ENCODE measurements at regions of chr12 and their contacts with region 1.

Region 1: DNA sequence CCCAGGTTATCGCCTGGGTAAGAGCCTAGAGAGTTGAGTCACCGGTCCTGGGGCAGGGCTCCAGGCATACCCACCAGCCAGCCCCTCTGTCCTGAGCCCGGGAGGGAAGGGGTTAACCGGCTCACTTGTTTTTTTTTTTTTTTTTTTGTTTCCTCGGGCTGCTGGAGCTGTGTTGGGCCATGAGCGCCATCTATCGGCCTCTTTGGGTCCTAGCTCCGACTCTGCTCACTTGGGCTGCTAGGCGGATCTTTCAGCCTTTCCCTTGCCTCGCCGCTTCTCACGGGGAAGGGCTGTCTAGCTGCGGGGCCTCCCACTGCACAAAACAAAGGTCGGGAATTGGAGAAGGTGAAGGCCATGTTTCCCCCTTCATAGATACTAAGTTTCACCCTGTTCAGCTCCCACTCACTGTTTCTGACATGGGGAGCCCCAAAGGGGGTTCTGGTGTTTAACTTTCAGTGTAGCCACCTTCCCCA is 2.8 kb upstream of the SMUG1 start:
- DNase-seq: peak; percentile 76
- H3K4me3 ChIP-seq: no peak overlapping the region
- H3K27ac ChIP-seq: no peak overlapping the region
- H3K4me1 ChIP-seq: peaks cover 18% of the 10 kb centered on the region
- H3K27me3 ChIP-seq: peaks cover 68% of the 10 kb centered on the region
- CTCF ChIP-seq: peak; percentile 86

Region 2: DNA sequence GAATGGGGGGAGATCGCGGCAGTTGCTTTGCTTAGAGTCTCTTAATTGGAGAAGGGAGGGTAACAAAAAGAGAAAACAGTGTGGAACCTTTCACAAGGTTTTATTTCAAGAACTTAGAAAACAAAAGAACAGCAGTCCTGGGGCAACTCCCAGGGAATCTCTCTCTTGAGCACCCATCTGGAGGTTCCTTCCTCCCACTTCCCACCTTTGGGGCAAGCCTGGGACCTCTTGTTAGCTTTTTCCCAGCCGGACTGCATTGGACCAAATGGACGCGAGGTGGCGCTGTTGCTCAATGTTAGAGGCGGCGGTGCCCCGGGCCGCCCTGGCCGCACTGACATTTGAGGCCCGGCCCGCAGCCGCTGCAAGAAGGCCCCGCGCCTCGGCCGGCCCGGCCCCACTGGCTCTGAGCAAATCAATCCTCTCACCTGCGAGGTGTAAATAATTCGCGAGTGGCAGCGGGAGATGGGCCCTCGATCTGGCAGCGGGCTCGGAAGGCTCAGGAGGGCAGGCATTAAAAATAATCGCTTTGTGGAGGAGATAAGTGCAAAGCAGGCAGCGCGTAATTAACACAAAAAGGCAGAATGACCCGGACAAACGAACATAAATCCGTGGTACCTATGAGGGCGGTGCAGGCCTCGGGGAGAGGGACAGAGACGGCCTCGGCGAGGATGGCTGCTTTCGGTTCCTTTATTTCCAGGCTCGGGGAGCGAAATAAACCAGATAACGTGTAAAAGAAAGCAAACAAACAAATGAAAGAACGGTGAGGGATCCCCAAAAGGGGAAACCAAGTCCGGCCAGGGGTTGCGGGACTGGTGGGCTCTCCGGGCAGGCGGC is 185.5 kb before region 1 on chr12:
- intact Hi-C with region 1: loop called (anchors 5 kb)
- DNase-seq: peak; percentile 87
- H3K4me3 ChIP-seq: peak overlapping the region; percentile 52
- H3K27ac ChIP-seq: no peak overlapping the region
- H3K4me1 ChIP-seq: peaks cover 15% of the 10 kb centered on the region
- H3K27me3 ChIP-seq: peaks cover 98% of the 10 kb centered on the region
- CTCF ChIP-seq: peak; percentile 92